ENCODE measurements at regions of chr11 and their contacts with region 1.

Region 1: DNA sequence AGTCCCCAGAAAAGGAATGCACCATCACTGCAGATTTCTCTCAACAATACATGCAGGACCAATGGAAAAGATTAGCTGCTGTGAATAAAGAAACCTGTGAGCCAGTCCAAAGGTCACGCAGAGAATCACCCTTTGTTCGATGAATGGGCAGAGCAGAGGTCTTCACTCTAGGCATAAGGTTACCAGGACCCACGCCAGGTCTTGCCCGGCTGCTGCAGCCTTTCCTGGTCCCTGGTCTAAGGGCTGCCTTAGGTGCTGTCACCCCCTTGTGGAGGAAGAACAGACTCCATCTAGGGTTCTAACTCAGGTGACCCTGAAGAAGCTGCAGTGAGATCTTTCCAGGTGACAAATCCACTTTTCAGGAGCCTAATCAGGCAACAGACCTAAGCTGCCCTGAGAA is 29.0 kb upstream of the NAP1L4 start:
- DNase-seq: peak in 12 of 14 experiments; percentile 28 to 74 (median 38)
- ATAC-seq: peak; percentile 60
- H3K4me3 ChIP-seq: no peak overlapping the region
- H3K4me3 Mint-ChIP-seq: no peak overlapping the region
- H3K27ac ChIP-seq: no peak overlapping the region
- H3K27ac Mint-ChIP-seq: no peak overlapping the region
- H3K4me1 ChIP-seq: peaks cover 54% of the 10 kb centered on the region
- H3K4me1 Mint-ChIP-seq: peaks cover 35% of the 10 kb centered on the region
- H3K27me3 ChIP-seq: no peaks in the 10 kb centered on the region
- H3K27me3 Mint-ChIP-seq: no peaks in the 10 kb centered on the region
- CTCF ChIP-seq: peak; percentile 42

Region 2: GRCh38 chr11:2975594-2975993 is 45.5 kb before region 1 on chr11:
- CTCF ChIA-PET with region 1: interaction called, 30 read pairs
- POLR2A ChIA-PET with region 1: interaction called, 3 read pairs
- intact Hi-C with region 1: loop called (anchors 1 to 2 kb)
- DNase-seq: peak; percentile 25 to 78 (median 48)
- ATAC-seq: peak; percentile 97
- H3K4me3 ChIP-seq: no peak overlapping the region
- H3K4me3 Mint-ChIP-seq: no peak overlapping the region
- H3K27ac ChIP-seq: no peak overlapping the region
- H3K27ac Mint-ChIP-seq: no peak overlapping the region
- H3K4me1 ChIP-seq: peaks cover 13% of the 10 kb centered on the region
- H3K4me1 Mint-ChIP-seq: peaks cover 38% of the 10 kb centered on the region
- H3K27me3 ChIP-seq: no peaks in the 10 kb centered on the region
- H3K27me3 Mint-ChIP-seq: no peaks in the 10 kb centered on the region
- CTCF ChIP-seq: peak; percentile 56